CD8-positive, alpha-beta T cell (primary cell): ENCODE measurements at regions of chrX and their contacts with region 1.

Region 1: DNA sequence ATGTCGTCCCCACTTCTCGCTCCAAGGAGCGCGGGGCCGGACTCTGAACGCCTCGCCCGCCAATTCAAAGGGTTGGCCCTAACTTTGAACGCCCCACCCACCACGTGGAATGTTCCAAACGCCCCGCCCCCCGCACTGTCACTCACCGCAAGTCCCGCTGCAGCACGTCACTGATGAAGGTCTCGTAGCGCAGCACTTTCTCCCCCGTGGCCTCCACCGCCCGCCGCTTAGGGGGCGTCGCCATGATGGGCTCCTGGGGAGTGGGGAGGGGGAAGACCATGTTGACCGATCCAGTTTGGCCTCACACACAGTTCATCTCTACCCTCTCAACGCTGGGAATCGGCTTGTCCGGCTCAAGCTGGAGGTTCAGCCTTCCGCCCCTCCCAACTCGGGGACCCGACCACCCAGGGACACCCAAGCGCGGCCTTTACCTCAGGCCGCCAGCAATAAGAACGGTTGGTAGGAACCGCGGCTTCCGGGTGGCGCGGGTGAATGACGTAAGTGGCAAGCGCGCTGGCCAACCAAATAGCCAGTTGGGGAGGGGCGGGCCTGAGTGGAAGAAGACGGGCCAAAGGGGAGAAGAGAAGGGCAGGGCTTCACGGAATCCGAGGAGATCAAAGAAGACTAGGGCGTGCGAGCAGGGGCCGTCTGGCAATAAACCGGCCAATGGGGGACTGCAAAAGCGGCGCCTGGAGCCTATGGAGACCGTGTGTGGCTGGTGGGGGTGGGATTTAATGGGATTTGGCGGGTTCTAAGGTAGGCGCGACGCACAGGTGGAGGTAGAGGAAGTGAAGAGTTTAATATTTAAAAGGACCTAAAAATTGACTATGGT is at the start of gene UXT:
- DNase-seq: peak; percentile 80 to 95 (median 91)
- ATAC-seq: peak; percentile 81
- H3K4me3 ChIP-seq: peak within 1 kb of the TSS; percentile 86 to 92
- H3K4me3 Mint-ChIP-seq: peak within 1 kb of the TSS; percentile 90
- H3K27ac ChIP-seq: peak within 1 kb of the TSS; percentile 100
- H3K27ac Mint-ChIP-seq: peak within 1 kb of the TSS; percentile 99
- H3K4me1 ChIP-seq: peaks cover 16% of the 10 kb centered on the region
- H3K4me1 Mint-ChIP-seq: peaks cover 15% of the 10 kb centered on the region
- H3K27me3 ChIP-seq: no peaks in the 10 kb centered on the region
- H3K27me3 Mint-ChIP-seq: no peaks in the 10 kb centered on the region
- CTCF ChIP-seq: no peak
- total RNA-seq, gene UXT: 202 TPM

Region 2: DNA sequence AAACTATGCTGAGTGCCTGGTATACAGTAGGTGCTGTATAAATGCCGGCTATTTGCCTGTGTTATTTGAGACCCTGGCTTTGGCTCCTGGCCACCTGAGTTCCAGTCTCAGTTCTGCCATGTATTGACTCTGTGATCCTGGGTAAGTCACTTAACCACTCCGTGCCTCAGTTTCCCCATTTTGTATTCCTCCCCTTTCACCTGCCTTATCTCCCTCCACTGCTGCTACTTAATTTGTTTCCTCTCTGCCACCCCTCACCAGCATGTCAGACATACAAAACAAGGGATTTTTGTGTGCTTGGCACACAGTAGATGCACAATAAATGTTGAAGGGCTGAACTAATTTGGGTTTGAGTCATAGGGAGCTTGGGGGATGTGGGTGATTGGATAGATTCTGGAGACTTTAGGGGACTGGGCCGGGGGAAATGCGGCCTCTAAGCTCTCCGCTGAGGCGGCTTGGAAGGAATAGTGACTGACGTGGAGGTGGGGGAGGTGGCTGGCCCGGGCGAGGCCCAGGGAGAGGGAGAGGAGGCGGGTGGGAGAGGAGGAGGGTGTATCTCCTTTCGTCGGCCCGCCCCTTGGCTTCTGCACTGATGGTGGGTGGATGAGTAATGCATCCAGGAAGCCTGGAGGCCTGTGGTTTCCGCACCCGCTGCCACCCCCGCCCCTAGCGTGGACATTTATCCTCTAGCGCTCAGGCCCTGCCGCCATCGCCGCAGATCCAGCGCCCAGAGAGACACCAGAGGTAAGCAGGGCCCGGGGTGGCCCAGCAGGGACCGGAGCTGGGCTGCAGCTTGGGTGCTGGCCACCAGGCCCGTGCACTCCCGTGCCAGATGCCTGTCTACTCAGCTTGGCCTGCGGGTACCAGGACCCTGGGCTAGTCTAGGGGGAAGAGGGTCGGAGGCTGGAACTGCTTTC is 76.9 kb before region 1 on chrX and contains the start of gene TIMP1:
- CTCF ChIA-PET with region 1: no interaction called
- POLR2A ChIA-PET with region 1: no interaction called
- intact Hi-C with region 1: loop called in 1 of 2 experiments (anchors 2 kb)
- DNase-seq: peak; percentile 31 to 87 (median 79)
- ATAC-seq: peak; percentile 95
- H3K4me3 ChIP-seq: peak within 1 kb of the TSS; percentile 40 to 50
- H3K4me3 Mint-ChIP-seq: peak within 1 kb of the TSS; percentile 76
- H3K27ac ChIP-seq: peak within 1 kb of the TSS; percentile 47 to 59
- H3K27ac Mint-ChIP-seq: peak within 1 kb of the TSS; percentile 87
- H3K4me1 ChIP-seq: peaks cover 10% of the 10 kb centered on the region
- H3K4me1 Mint-ChIP-seq: peaks cover 32% of the 10 kb centered on the region
- H3K27me3 ChIP-seq: no peaks in the 10 kb centered on the region
- H3K27me3 Mint-ChIP-seq: no peaks in the 10 kb centered on the region
- CTCF ChIP-seq: no peak
- total RNA-seq, gene TIMP1: 16.1 to 17.4 TPM

Region 3: DNA sequence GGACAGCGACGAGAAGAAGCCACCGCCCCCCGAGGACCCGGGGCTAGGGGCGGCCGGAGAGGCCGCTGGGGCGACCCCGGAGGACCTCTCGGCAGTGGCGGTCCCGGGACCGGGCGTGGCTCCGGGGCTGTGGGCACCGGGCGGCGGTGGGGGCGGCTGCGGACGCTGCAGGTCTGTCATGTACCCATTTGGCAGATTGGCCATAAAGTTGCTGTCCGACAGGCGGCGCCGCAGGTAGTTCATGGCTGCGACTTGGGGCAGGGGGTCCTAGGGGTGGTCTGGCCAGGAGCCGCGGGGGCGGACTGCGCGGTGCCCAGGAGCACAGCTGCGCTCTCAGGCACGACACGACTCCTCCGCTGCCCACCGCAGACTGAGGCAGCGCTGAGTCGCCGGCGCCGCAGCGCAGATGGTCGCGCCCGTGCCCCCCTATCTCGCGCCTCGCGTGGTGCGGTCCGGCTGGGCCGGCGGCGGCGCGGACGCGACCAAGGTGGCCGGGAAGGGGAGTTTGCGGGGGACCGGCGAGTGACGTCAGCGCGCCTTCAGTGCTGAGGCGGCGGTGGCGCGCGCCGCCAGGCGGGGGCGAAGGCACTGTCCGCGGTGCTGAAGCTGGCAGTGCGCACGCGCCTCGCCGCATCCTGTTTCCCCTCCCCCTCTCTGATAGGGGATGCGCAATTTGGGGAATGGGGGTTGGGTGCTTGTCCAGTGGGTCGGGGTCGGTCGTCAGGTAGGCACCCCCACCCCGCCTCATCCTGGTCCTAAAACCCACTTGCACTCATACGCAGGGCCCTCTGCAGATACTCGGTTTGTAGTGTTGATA is 39.2 kb before region 1 on chrX and contains the start of gene SYN1:
- CTCF ChIA-PET with region 1: no interaction called
- POLR2A ChIA-PET with region 1: no interaction called
- intact Hi-C with region 1: loop called in 1 of 2 experiments (anchors 5 kb)
- DNase-seq: peak; percentile 63 to 93 (median 83)
- ATAC-seq: peak; percentile 89
- H3K4me3 ChIP-seq: peak within 1 kb of the TSS; percentile 39 to 41
- H3K4me3 Mint-ChIP-seq: peak within 1 kb of the TSS; percentile 46
- H3K27ac ChIP-seq: no peak within 1 kb of the TSS
- H3K27ac Mint-ChIP-seq: no peak within 1 kb of the TSS
- H3K4me1 ChIP-seq: peaks cover 10% of the 10 kb centered on the region
- H3K4me1 Mint-ChIP-seq: peaks cover 21% of the 10 kb centered on the region
- H3K27me3 ChIP-seq: no peaks in the 10 kb centered on the region
- H3K27me3 Mint-ChIP-seq: peaks cover 8% of the 10 kb centered on the region
- CTCF ChIP-seq: no peak
- total RNA-seq, gene SYN1: 0.17 TPM in 1 of 2 experiments, not detected in the other

Region 4: GRCh38 chrX:48003758-48004457 is 345.0 kb after region 1 on chrX and contains the start of gene ZNF182:
- CTCF ChIA-PET with region 1: no interaction called
- POLR2A ChIA-PET with region 1: no interaction called
- intact Hi-C with region 1: loop called in 1 of 2 experiments (anchors 5 kb)
- DNase-seq: peak; percentile 84 to 96 (median 92)
- ATAC-seq: peak; percentile 92
- H3K4me3 ChIP-seq: peak within 1 kb of the TSS; percentile 72 to 81
- H3K4me3 Mint-ChIP-seq: peak within 1 kb of the TSS; percentile 99
- H3K27ac ChIP-seq: peak within 1 kb of the TSS; percentile 86 to 91
- H3K27ac Mint-ChIP-seq: peak within 1 kb of the TSS; percentile 100
- H3K4me1 ChIP-seq: peaks cover 7% of the 10 kb centered on the region
- H3K4me1 Mint-ChIP-seq: peaks cover 32% of the 10 kb centered on the region
- H3K27me3 ChIP-seq: no peaks in the 10 kb centered on the region
- H3K27me3 Mint-ChIP-seq: no peaks in the 10 kb centered on the region
- CTCF ChIP-seq: no peak
- total RNA-seq, gene ZNF182: 5.0 to 5.3 TPM